ENCODE measurements at regions of chr9 and their contacts with region 1.

Region 1: DNA sequence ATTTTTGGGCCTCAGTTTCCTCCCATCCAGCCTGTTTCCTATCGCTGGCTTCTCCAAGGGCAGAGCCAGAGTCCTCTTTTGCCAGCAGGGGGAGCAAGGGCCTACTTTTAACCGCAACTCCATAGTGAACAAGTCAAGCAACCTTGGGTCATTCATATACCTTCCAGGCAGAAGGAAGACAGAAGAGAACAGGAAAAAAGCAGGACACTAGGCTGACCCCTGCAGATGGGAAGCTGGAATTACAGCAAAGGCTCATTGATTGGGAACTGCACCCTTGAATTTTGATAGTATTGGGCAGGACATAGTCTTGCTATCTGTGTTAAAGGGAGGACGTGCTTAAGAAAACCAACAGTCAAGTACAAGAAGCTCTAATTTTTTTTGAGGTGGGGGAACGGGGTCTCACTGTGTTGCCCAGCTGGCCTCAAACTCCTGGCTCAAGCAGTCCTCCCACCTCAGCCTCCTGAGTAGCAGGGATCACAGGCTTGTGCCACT is 30.1 kb downstream of the QRFP start:
- DNase-seq: peak; percentile 79
- H3K4me3 ChIP-seq: peak overlapping the region in 1 of 2 experiments; percentile 24; a peak in 1 of 4 replicates
- H3K27ac ChIP-seq: no peak overlapping the region; a peak in 1 of 4 replicates
- H3K4me1 ChIP-seq: peaks cover 0 to 13% of the 10 kb centered on the region in 2 experiments; a peak in 2 of 4 replicates
- H3K27me3 ChIP-seq: no peaks in the 10 kb centered on the region
- CTCF ChIP-seq: peak; percentile 99
- EP300 ChIP-seq: 0 out of 4 replicates have a peak, but pooled peaks of 1 of the 2 experiments have one; percentile 12
- RAD21 ChIP-seq: peak; percentile 77

Region 2: GRCh38 chr9:130712564-130713285 is 153.8 kb before region 1 on chr9:
- CTCF ChIA-PET with region 1: interaction called, 177 read pairs
- POLR2A ChIA-PET with region 1: no interaction called
- DNase-seq: peak; percentile 96
- H3K4me3 ChIP-seq: peak overlapping the region; percentile 76 to 86
- H3K27ac ChIP-seq: peak overlapping the region; percentile 95 to 98
- H3K4me1 ChIP-seq: peaks cover 0 to 9% of the 10 kb centered on the region in 2 experiments; a peak in 2 of 4 replicates
- H3K27me3 ChIP-seq: no peaks in the 10 kb centered on the region
- CTCF ChIP-seq: no peak
- EP300 ChIP-seq: no peak
- RAD21 ChIP-seq: no peak

Region 3: GRCh38 chr9:130785940-130786508 is 80.5 kb before region 1 on chr9:
- CTCF ChIA-PET with region 1: interaction called, 16 read pairs
- POLR2A ChIA-PET with region 1: no interaction called
- DNase-seq: peak; percentile 32
- H3K4me3 ChIP-seq: no peak overlapping the region
- H3K27ac ChIP-seq: peak overlapping the region in 1 of 2 experiments; percentile 36; a peak in 1 of 4 replicates
- H3K4me1 ChIP-seq: peaks cover 7 to 15% of the 10 kb centered on the region in 2 experiments; a peak in 3 of 4 replicates
- H3K27me3 ChIP-seq: no peaks in the 10 kb centered on the region
- CTCF ChIP-seq: no peak
- EP300 ChIP-seq: no peak
- RAD21 ChIP-seq: no peak

Region 4: DNA sequence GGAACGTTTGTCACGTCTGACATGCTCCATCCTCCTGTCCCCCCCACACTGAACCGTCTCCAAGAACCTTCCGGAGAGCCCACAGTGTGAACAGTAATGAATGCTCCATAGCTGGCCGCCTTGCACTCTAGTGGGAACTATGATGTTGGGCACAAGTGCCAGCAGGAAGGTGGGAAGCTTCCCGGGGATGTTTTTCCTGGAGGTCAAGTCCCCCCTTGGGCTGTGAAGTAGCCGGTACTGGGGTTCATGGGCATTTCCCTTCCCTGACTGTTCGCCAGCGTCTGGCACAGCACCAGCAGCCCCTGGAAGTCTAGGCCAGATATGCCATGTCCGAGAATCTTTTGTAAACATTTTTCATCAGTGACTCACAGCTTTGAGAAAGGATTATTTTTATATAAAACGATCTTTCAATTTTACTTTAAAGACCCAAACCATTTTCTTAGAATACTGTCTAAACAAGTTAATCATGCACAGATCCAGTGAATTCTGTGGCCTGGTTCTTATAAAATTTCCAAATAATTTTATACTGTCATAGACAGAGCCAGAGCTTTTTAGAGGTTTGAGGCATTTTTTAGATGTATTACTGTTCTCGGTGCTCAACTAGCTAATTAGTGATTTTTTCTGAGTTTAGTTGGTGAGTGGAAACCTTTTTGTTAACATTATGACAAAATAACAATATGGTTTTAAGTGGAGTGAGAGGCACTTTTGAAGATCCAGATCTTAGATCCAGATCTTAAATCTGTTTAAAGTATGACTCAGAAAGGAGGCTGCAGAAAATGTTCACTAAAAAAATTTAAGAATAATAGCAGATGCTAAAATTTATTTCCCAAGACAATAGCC is 19.8 kb before region 1 on chr9:
- CTCF ChIA-PET with region 1: interaction called, 86 read pairs
- POLR2A ChIA-PET with region 1: no interaction called
- DNase-seq: peak; percentile 60
- H3K4me3 ChIP-seq: peak overlapping the region; percentile 23 to 55; a peak in 3 of 4 replicates
- H3K27ac ChIP-seq: peak overlapping the region; percentile 87 to 99
- H3K4me1 ChIP-seq: peaks cover 40 to 68% of the 10 kb centered on the region in 2 experiments
- H3K27me3 ChIP-seq: no peaks in the 10 kb centered on the region
- CTCF ChIP-seq: no peak
- EP300 ChIP-seq: peak in 1 of 2 experiments; percentile 60; a peak in 3 of 4 replicates
- RAD21 ChIP-seq: no peak

Region 5: DNA sequence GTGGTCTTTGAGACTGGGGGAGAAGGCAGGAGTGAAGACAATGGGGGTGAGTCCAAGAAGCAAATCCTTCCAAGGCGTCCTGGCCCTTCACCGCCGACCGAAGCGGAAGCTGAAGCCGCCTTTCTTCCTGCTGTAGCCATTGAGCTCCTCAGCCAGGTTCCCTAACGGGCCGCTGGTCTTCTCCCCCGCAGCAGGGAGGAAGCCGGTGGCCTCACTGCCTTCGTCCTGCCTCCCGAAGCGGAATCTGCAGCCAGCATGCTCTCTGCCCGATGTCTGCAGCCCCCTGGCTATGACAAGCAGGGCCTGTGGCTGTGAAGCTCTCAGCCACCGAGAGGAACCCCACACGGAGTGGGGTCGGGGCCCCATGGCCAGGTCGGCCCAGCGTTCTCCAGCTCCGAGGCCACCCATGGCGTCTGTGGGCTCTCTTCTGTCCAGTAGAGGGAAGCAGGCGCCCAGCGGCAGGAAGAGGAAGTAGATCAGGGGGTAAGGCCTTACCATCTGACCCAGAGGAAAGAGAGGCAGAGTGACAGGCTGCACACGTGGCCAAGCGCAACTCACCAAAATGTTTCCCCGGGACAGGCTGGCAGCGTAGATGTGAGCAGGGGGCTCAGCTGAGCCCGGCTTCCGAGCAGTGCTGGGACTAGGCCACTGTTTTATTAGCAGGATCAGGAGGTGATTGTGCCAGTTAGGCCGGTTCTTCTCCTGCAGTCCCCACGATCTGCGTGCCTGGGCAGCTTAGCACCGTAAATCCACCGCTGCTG is 27.0 kb after region 1 on chr9:
- CTCF ChIA-PET with region 1: interaction called, 19 read pairs
- POLR2A ChIA-PET with region 1: no interaction called
- DNase-seq: peak; percentile 41
- H3K4me3 ChIP-seq: no peak overlapping the region
- H3K27ac ChIP-seq: no peak overlapping the region
- H3K4me1 ChIP-seq: peaks cover 0 to 3% of the 10 kb centered on the region in 2 experiments; a peak in 1 of 4 replicates
- H3K27me3 ChIP-seq: no peaks in the 10 kb centered on the region
- CTCF ChIP-seq: 0 out of 2 replicates have a peak, but pooled peaks have one; percentile 10
- EP300 ChIP-seq: no peak
- RAD21 ChIP-seq: no peak

Region 6: DNA sequence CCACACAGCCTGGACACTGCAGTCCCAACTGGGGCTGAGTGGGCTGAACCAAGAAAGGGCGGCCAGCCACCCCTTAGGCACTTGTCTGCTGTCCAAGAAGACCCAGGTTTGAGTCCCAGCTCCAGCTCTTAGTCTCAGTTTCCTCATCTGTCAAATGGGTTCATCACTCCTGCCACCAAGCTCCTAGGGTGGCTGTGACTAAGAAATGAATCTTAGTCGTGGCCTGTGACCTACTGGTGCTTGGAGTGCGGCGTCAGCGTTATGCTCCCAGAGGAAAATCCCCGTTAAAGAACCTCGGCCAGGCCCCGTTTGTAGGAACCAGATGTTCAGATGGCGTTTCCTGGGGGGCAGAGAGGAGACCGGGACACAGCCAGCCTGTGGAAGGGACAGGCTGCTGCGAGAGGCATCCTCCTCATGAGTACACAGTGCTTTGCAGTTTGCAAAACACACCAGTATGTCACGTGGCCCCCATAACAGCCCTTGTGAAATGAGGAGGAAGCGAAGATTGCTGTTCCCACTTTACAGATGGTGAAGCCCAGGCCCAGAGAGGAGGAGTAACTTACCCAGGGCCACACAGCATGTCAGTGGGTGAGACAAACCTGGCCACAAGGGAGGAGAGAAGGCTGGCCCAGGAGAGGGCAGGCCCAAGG is 69.3 kb after region 1 on chr9:
- CTCF ChIA-PET with region 1: interaction called, 21 read pairs
- POLR2A ChIA-PET with region 1: no interaction called
- DNase-seq: no peak
- H3K4me3 ChIP-seq: no peak overlapping the region
- H3K27ac ChIP-seq: no peak overlapping the region
- H3K4me1 ChIP-seq: peaks cover 7% of the 10 kb centered on the region in 2 experiments; a peak in 2 of 4 replicates
- H3K27me3 ChIP-seq: peaks cover 19% of the 10 kb centered on the region
- CTCF ChIP-seq: no peak
- EP300 ChIP-seq: no peak
- RAD21 ChIP-seq: no peak

Region 7: GRCh38 chr9:130997925-130998596 is 131.5 kb after region 1 on chr9:
- CTCF ChIA-PET with region 1: interaction called, 173 read pairs
- POLR2A ChIA-PET with region 1: no interaction called
- DNase-seq: peak; percentile 96
- H3K4me3 ChIP-seq: no peak overlapping the region; a peak in 1 of 4 replicates
- H3K27ac ChIP-seq: no peak overlapping the region
- H3K4me1 ChIP-seq: peaks cover 2 to 6% of the 10 kb centered on the region in 2 experiments; a peak in 1 of 4 replicates
- H3K27me3 ChIP-seq: peaks cover 21% of the 10 kb centered on the region; the same call in 1 of the 2 replicates
- CTCF ChIP-seq: peak; percentile 85
- EP300 ChIP-seq: no peak
- RAD21 ChIP-seq: peak; percentile 80